ENCODE measurements at regions of chr22 and their contacts with region 1.

Region 1: GRCh38 chr22:50250555-50251476 is at the start of gene HDAC10:
- DNase-seq: peak; percentile 93
- CTCF ChIP-seq: no peak

Region 2: GRCh38 chr22:50218996-50219727 is 31.7 kb before region 1 on chr22:
- CTCF ChIA-PET with region 1: no interaction called
- POLR2A ChIA-PET with region 1: no interaction called
- DNase-seq: no peak
- CTCF ChIP-seq: no peak

Region 3: GRCh38 chr22:50260801-50261614 is 10.2 kb after region 1 on chr22:
- CTCF ChIA-PET with region 1: interaction called, 64 read pairs
- POLR2A ChIA-PET with region 1: no interaction called
- DNase-seq: peak; percentile 73
- CTCF ChIP-seq: no peak

Region 4: GRCh38 chr22:50341977-50342650 is 91.3 kb after region 1 on chr22:
- CTCF ChIA-PET with region 1: interaction called, 13 read pairs
- POLR2A ChIA-PET with region 1: no interaction called
- DNase-seq: peak; percentile 83
- CTCF ChIP-seq: peak; percentile 95